ENCODE measurements at regions of chr2 and their contacts with region 1.

Region 1: DNA sequence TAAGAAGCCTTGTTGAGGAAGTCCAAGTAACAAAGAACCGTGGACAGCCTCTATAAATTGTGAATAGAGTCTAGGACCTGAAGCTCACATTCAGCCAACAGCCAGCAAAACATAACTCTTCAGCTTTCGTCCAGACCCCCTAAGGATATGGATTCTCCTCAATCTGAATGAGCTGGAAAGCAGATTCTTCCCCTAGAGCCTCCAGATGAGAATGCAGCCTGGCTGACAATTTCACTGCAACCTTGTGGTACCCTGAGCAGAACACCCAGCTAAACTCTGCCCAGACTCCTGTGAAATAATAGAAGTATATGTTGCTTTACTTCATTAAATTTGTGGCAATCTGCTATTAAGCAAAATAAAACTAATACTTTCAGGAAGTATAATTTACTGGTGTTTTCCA is 483.5 kb upstream of the SLC8A1 start:
- DNase-seq: no peak
- ATAC-seq: no peak
- H3K4me3 ChIP-seq: no peak overlapping the region
- H3K27ac ChIP-seq: no peak overlapping the region
- H3K4me1 ChIP-seq: no peaks in the 10 kb centered on the region
- H3K27me3 ChIP-seq: no peaks in the 10 kb centered on the region
- CTCF ChIP-seq: no peak

Region 2: DNA sequence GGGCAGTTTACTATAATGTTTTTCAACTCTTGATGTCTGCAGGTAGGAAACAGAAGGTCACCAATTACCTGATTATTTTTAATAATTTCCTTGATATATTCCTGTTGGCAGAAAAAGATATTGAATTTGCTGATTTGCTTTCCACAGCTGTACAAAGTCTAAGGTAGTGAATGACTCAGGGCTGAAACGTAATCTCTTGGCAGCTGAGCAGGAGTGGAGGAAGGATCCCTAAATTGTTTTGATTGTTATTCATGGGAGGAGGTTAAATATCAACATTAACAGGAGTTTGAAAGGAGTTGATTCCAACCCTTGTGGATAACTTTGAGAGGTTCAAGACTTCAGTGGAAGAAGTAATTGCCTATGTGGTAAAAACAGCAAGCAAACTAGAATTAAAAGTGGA is 138.2 kb before region 1 on chr2:
- intact Hi-C with region 1: loop called in 1 of 2 experiments (anchors 10 kb)
- DNase-seq: no peak
- ATAC-seq: peak; percentile 19
- H3K4me3 ChIP-seq: no peak overlapping the region
- H3K27ac ChIP-seq: no peak overlapping the region
- H3K4me1 ChIP-seq: no peaks in the 10 kb centered on the region
- H3K27me3 ChIP-seq: no peaks in the 10 kb centered on the region
- CTCF ChIP-seq: no peak